Naive thymus-derived CD4-positive, alpha-beta T cell (primary cell): ENCODE measurements at regions of chr7 and their contacts with region 1.

Region 1: GRCh38 chr7:44638611-44639557 is 32.5 kb downstream of the OGDH start:
- DNase-seq: peak; percentile 15 to 81 (median 40)
- ATAC-seq: peak; percentile 83
- H3K4me3 ChIP-seq: peak overlapping the region; percentile 28
- H3K4me3 Mint-ChIP-seq: peak overlapping the region; percentile 57 to 95 (median 78)
- H3K27ac ChIP-seq: peak overlapping the region; percentile 79
- H3K27ac Mint-ChIP-seq: peak overlapping the region; percentile 92 to 100 (median 98)
- H3K4me1 ChIP-seq: peaks cover 37 to 77% of the 10 kb centered on the region in 2 donors
- H3K4me1 Mint-ChIP-seq: peaks cover 46 to 80% (median 57%) of the 10 kb centered on the region in 7 donors
- H3K27me3 ChIP-seq: no peaks in the 10 kb centered on the region
- H3K27me3 Mint-ChIP-seq: no peaks in the 10 kb centered on the region

Region 2: GRCh38 chr7:44521347-44522095 is 117.4 kb before region 1 on chr7:
- CTCF ChIA-PET with region 1: no interaction called
- POLR2A ChIA-PET with region 1: no interaction called
- intact Hi-C with region 1: no loop called
- DNase-seq: no peak
- ATAC-seq: no peak
- H3K4me3 ChIP-seq: no peak overlapping the region
- H3K4me3 Mint-ChIP-seq: peak overlapping the region in 1 of 10 donors; percentile 25
- H3K27ac ChIP-seq: no peak overlapping the region
- H3K27ac Mint-ChIP-seq: no peak overlapping the region
- H3K4me1 ChIP-seq: no peaks in the 10 kb centered on the region
- H3K4me1 Mint-ChIP-seq: no peaks in the 10 kb centered on the region
- H3K27me3 ChIP-seq: no peaks in the 10 kb centered on the region
- H3K27me3 Mint-ChIP-seq: peaks cover 0 to 10% (median 7%) of the 10 kb centered on the region in 5 donors

Region 3: DNA sequence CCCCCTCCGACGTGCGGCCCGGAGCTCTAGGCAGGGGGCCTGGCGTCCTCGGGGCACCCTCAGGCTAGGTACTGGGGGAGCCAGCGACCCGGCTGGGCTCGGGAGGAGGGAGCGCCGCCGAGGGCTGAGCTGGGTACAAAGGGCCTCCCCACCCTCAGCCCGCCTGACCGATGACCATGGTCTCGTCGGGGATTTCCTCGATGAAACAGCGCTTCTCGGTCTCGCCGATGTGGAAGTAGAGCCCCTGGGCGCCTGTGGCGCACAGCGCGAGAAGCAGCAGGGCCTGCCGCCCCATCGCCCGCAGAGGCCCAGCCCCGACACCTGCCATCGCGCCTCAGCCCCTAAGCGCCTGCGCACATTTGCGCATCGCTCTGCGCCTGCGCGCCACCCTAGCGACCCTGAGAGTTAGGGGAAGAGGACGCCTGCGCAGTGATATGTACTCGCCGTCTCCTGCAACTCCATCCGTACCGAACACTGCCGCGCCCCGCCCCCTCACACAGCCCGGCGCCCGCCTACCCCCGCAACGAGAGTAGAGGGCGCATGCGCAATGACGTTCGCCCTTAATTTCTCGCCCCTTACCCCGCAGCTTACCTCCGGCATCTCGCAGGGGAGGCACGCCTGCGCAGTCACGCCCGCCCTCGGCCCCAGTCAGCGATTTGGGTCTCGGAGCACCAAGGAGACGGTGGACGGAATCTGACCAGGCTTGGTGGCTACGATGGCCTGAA is 56.8 kb before region 1 on chr7 and contains the start of gene TMED4:
- CTCF ChIA-PET with region 1: no interaction called
- POLR2A ChIA-PET with region 1: interaction called, 7 read pairs
- intact Hi-C with region 1: loop called in 1 of 2 experiments (anchors 1 kb)
- DNase-seq: peak; percentile 100
- ATAC-seq: peak; percentile 96
- H3K4me3 ChIP-seq: peak within 1 kb of the TSS; percentile 95
- H3K4me3 Mint-ChIP-seq: peak within 1 kb of the TSS; percentile 86 to 97 (median 92)
- H3K27ac ChIP-seq: peak within 1 kb of the TSS; percentile 90
- H3K27ac Mint-ChIP-seq: peak within 1 kb of the TSS; percentile 95 to 99 (median 98)
- H3K4me1 ChIP-seq: peaks cover 14 to 19% of the 10 kb centered on the region in 2 donors
- H3K4me1 Mint-ChIP-seq: peaks cover 13 to 43% (median 38%) of the 10 kb centered on the region in 7 donors
- H3K27me3 ChIP-seq: no peaks in the 10 kb centered on the region
- H3K27me3 Mint-ChIP-seq: peaks cover 0 to 12% (median 0%) of the 10 kb centered on the region in 5 donors
- total RNA-seq, gene TMED4: 70.0 to 98.5 (median 95.3) TPM

Region 4: DNA sequence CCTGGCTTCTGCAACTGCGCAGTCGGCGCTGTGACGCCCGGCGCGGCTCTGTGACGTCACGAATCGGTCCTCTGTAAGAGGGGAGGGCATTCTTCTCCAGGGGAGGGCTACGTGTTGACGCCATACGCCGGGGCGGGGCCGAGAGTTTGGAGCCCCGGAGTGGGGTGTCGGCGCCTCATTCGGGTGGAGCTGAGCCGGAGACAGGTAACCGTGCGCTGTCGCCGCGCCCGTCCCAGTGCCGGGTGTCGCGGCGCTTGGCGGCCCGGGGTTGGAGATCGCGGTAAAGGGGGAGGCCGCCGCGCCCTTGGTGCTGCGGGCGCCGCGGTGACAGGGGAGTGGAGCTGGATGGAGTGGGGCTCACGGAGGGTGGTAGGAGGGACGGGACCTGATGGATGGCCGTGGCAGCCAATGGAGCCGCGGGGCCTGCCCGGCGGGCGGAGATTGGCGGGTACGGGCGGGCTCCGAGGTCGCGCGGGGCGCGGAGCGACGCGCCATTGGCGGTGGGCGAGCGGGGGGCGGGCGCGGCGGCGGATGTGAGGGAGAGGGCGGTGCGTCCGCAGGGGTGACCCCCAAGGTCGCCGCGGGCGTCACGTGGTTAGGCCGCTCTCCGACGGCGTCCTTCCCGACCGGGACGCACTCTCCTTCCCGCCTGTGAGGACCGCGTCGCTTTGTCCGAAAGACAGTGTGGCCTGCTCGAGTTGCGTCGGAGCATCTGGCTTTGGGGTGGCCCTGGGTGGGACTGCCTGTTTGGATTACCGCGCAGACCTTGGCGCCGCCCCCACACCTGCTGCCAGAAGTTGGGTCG is 32.2 kb before region 1 on chr7 and contains the start of gene OGDH:
- CTCF ChIA-PET with region 1: interaction called, 4 read pairs
- POLR2A ChIA-PET with region 1: interaction called, 59 read pairs
- intact Hi-C with region 1: loop called (anchors 1 kb)
- DNase-seq: peak; percentile 99 to 100 (median 100)
- ATAC-seq: peak; percentile 95
- H3K4me3 ChIP-seq: peak within 1 kb of the TSS; percentile 71
- H3K4me3 Mint-ChIP-seq: peak within 1 kb of the TSS; percentile 81 to 99 (median 98)
- H3K27ac ChIP-seq: peak within 1 kb of the TSS; percentile 93
- H3K27ac Mint-ChIP-seq: peak within 1 kb of the TSS; percentile 93 to 100 (median 98)
- H3K4me1 ChIP-seq: peaks cover 13 to 17% of the 10 kb centered on the region in 2 donors
- H3K4me1 Mint-ChIP-seq: peaks cover 0 to 45% (median 37%) of the 10 kb centered on the region in 7 donors
- H3K27me3 ChIP-seq: no peaks in the 10 kb centered on the region
- H3K27me3 Mint-ChIP-seq: peaks cover 0 to 20% (median 0%) of the 10 kb centered on the region in 5 donors
- total RNA-seq, gene OGDH: 43.1 to 122 (median 66.3) TPM

Region 5: GRCh38 chr7:44652535-44652934 is 13.7 kb after region 1 on chr7:
- CTCF ChIA-PET with region 1: no interaction called
- POLR2A ChIA-PET with region 1: interaction called, 6 read pairs
- intact Hi-C with region 1: loop called in 1 of 2 experiments (anchors 2 kb)
- DNase-seq: no peak
- ATAC-seq: no peak
- H3K4me3 ChIP-seq: no peak overlapping the region
- H3K4me3 Mint-ChIP-seq: no peak overlapping the region
- H3K27ac ChIP-seq: no peak overlapping the region
- H3K27ac Mint-ChIP-seq: no peak overlapping the region
- H3K4me1 ChIP-seq: no peaks in the 10 kb centered on the region
- H3K4me1 Mint-ChIP-seq: peaks cover 0 to 6% (median 0%) of the 10 kb centered on the region in 7 donors
- H3K27me3 ChIP-seq: no peaks in the 10 kb centered on the region
- H3K27me3 Mint-ChIP-seq: no peaks in the 10 kb centered on the region

Region 6: DNA sequence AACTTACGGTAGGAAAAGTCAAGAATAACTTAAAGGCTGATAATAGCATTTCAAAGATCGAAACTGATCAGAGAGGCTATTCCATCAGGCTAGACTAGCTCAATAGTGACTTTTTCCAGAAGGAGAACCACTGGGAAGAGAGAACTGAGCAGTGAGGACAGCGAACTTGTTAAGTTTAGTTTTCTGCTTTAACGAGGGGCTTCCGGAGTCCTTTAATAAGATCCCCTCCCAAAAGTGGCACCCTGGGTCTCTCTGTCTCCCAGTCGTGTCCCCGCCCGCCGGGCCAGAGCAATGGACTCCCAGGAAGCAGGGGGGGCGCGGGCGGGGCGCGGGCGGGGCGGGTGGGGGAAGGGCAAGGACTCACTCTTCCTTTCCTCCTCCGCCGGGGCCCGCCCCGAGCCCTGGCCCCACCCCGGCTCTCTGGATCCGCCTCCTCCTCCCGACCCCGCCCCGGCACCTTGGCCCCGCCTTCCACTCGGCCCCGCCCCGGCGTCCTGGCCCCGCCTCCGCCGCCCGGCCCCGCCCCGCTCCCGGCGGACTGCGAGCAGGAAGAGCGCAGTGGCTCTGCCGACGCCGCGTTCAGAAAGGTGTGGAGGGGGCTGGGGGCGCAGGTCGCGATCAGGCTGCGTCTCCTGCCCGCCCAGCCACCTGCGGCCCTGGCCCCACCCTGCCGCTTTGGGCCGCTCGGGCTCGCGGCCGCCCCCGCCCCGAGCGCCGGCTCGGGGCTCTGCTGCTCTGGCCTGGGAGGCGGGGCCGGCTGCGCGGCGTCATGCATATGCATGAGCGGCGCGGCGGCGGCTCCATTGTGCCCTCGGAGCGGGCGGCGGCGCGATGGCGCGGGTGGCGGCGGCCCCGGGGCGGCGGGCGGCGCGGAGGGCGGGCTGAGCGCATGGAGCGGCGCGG is 109.4 kb after region 1 on chr7 and contains the start of gene ZMIZ2:
- CTCF ChIA-PET with region 1: no interaction called
- POLR2A ChIA-PET with region 1: no interaction called
- intact Hi-C with region 1: loop called (anchors 1 to 2 kb)
- DNase-seq: peak; percentile 87 to 99 (median 93)
- ATAC-seq: peak; percentile 94
- H3K4me3 ChIP-seq: peak within 1 kb of the TSS; percentile 64
- H3K4me3 Mint-ChIP-seq: peak within 1 kb of the TSS; percentile 77 to 92 (median 88)
- H3K27ac ChIP-seq: peak within 1 kb of the TSS; percentile 98
- H3K27ac Mint-ChIP-seq: peak within 1 kb of the TSS; percentile 81 to 98 (median 92)
- H3K4me1 ChIP-seq: peaks cover 21 to 22% of the 10 kb centered on the region in 2 donors
- H3K4me1 Mint-ChIP-seq: peaks cover 22 to 63% (median 45%) of the 10 kb centered on the region in 7 donors
- H3K27me3 ChIP-seq: no peaks in the 10 kb centered on the region
- H3K27me3 Mint-ChIP-seq: no peaks in the 10 kb centered on the region
- total RNA-seq, gene ZMIZ2: 108 to 187 (median 144) TPM